ENCODE measurements at regions of chr9 and their contacts with region 1.

Region 1: GRCh38 chr9:96327694-96328352 is 25.8 kb upstream of the HSD17B3 start:
- DNase-seq: no peak

Region 2: DNA sequence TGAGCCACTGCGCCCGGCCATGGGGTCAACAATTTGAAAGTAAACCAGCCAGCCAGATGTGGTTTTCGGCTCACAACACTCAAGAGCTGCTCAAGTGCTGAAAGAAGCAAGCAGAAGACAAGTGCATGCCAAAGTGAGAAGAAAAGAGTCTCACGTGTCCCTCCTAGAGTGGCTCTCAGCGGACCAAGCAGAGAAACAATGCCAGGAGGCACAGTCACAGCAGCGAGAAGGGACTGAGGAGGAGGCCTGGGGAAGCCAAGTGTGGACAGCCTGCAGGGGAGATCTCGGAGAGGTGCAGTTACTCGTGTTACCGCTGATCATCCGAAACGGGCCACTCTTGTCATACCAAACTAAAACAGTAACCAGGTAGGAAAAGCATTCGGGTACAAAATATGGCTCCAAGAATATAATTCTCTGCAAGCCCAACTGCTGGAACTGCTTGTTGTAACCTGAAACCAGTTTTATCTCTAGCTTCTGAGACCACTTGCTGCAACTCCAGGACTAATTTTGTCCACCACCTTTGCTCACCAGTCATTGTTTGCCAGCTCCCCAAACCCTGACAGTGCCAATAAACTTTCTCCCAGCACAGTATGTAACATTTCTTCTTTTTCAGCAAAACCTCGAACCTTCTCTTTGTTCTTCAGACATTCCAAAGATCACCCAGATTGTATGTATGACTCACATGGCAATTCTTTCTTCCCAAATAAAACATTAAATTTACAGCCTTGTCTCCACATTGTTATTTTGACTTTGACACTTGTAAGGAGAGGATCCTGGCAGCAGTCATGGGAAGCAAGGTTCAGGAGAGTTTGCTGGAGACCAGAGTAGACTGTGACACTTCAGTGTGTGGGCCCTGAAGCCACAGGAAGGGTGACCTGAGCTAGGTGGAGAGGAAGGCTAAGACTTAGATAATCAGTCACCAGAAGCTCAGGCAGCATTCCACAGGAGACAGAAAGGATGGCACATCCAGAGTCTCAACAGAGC is 49.4 kb after region 1 on chr9:
- intact Hi-C with region 1: loop called (anchors 10 kb)
- DNase-seq: no peak